ENCODE measurements at regions of chr4 and their contacts with region 1.

Region 1: DNA sequence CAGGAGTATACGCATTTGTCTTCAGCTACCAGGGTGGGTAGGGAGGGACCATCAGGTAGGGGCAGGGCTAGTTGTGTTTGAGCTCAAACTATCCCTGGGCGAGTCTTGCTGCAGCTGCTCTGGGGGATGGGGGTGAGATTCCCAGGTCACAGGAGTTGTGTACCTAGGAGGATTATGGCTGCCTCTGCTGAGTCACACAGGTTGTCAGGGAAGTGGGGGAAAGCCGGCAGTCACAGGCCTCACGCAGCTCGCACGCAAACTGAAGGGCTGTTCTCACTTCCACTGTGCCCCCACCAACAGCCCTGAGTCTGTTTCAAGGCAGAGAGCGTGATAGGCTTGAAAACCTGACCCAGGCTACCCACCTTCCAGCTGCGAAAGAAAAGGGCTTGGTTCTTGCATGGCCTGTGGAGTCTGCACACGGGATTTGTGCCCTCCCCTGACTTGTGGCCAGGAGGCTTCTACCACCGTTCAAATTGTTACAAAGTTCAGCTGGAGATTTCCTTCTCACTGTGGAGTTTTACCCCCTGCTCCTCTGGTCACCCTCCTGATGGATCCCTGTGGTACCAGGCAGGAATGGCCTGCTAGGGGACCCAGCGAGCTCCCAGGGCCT is 63.8 kb downstream of the ARFIP1 start:
- DNase-seq: peak in 1 of 2 donors; percentile 62
- H3K4me3 ChIP-seq: no peak overlapping the region
- H3K27ac ChIP-seq: peak overlapping the region in 4 of 5 donors; percentile 2 to 32 (median 18)
- H3K4me1 ChIP-seq: peaks cover 0 to 16% (median 2%) of the 10 kb centered on the region in 4 donors
- H3K27me3 ChIP-seq: no peaks in the 10 kb centered on the region
- CTCF ChIP-seq: no peak
- EP300 ChIP-seq: no peak
- POLR2A ChIP-seq: no peak

Region 2: DNA sequence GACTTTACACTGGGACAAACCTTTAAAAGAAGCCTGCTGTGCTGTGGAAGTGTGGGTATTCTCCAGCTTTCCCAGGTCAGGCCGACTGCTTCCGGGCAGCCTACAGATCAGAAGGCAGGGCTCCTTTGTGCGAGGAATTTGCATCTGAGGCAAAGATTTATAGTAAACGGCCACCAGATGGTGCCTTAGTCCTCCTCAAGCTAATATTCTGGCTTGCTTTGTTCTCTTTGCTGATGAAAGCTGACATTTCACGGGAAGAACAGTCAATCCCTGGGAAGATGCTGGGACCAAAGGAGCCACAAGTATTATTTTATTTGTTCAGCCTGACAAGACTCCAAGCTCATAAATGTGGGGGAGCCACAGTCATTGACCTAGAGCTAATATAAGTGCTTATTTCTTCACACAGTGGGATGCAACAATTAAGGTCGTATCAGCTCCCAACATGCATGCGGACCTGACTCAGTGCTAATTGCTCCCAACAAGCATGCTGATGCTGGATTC is 239.9 kb after region 1 on chr4:
- intact Hi-C with region 1: loop called (anchors 5 kb)
- DNase-seq: peak; percentile 69 to 93
- H3K4me3 ChIP-seq: no peak overlapping the region
- H3K27ac ChIP-seq: peak overlapping the region in 1 of 5 donors; percentile 38
- H3K4me1 ChIP-seq: peaks cover 8 to 21% (median 15%) of the 10 kb centered on the region in 4 donors
- H3K27me3 ChIP-seq: no peaks in the 10 kb centered on the region
- CTCF ChIP-seq: peak in 5 of 7 experiments; percentile 28 to 72 (median 57)
- EP300 ChIP-seq: no peak
- POLR2A ChIP-seq: no peak

Region 3: GRCh38 chr4:153232768-153233167 is 389.2 kb after region 1 on chr4:
- intact Hi-C with region 1: no loop called
- DNase-seq: peak; percentile 50 to 63
- H3K4me3 ChIP-seq: no peak overlapping the region
- H3K27ac ChIP-seq: peak overlapping the region; percentile 31 to 72 (median 68)
- H3K4me1 ChIP-seq: peaks cover 28 to 64% (median 46%) of the 10 kb centered on the region in 4 donors
- H3K27me3 ChIP-seq: no peaks in the 10 kb centered on the region
- CTCF ChIP-seq: peak in 3 of 7 experiments; percentile 11 to 38 (median 17)
- EP300 ChIP-seq: no peak
- POLR2A ChIP-seq: no peak